ENCODE measurements at regions of chr11 and their contacts with region 1.

Region 1: DNA sequence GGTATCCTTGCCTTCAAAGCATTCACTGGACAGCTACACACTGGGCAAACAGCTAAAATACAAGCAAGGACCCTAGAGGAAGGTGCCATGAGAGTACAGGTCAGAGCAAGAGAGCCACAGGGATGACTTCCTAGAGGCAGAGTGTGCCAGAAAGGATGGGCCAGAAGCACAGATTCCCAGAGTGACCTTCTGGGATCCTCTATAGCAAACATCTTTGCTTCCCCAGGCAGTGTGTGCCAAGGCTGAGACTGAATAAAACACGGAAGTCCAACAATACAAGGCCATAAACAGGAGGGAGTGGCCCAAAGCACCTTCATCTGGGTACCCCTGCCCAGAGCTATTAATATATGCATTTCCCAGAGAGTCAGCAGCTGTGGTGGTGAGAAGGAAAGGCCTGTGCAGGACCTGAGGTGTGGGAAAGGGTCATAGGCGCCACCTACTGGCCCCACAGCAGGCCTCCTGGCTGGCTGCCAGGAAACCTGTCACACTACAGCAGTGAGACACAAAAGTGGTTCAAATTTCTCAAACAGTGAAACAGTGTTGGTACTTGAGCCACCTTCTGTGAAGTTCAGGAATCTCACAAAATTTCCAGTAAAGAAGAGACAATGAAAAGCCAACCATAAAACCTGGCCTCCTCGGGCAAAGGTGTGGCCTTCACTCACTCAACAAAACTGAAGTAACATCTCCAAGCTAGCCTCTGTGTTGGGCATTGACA is 20.3 kb downstream of the CLPB start:
- DNase-seq: peak; percentile 84

Region 2: DNA sequence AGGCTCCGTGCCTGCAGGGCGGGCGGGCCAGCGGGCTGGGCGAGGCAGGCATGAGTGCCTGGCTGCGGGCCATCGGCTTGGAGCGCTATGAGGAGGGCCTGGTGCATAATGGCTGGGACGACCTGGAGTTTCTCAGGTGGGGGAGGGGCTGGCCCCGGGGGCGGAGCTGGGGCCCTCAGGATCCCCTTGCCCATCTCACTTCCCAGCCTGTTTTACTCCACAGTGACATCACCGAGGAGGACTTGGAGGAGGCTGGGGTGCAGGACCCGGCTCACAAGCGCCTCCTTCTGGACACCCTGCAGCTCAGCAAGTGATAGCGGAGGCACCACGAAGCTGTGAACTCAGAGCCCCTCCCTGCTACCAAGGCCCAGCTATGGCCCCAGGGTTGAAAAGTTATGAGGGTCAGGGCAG is 176.0 kb before region 1 on chr11:
- CTCF ChIA-PET with region 1: no interaction called
- POLR2A ChIA-PET with region 1: no interaction called
- DNase-seq: peak; percentile 85

Region 3: DNA sequence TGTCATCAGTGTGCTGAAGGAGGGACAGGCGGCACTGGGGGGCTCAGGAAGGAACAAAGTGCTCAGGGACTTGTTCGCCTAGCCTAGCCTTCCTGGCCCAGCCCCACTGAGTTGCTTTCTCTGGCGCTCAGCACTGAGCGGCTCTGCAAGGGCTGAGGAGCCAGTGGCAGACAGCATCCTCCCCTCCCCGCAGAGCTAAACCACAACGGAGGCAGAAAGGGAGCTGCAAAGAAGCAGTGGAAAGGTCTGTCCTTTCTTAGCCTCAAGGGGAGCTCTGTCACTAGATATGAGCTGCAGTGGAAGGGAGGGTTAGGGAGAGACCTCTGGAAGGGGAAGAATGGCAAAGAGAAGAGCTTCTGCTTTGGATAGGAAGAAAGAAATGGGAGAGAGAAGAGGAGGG is 80.4 kb before region 1 on chr11:
- CTCF ChIA-PET with region 1: interaction called, 10 read pairs
- POLR2A ChIA-PET with region 1: no interaction called
- DNase-seq: peak; percentile 30

Region 4: GRCh38 chr11:72352859-72353551 is 61.1 kb before region 1 on chr11:
- CTCF ChIA-PET with region 1: interaction called, 15 read pairs
- POLR2A ChIA-PET with region 1: no interaction called
- DNase-seq: peak; percentile 20

Region 5: DNA sequence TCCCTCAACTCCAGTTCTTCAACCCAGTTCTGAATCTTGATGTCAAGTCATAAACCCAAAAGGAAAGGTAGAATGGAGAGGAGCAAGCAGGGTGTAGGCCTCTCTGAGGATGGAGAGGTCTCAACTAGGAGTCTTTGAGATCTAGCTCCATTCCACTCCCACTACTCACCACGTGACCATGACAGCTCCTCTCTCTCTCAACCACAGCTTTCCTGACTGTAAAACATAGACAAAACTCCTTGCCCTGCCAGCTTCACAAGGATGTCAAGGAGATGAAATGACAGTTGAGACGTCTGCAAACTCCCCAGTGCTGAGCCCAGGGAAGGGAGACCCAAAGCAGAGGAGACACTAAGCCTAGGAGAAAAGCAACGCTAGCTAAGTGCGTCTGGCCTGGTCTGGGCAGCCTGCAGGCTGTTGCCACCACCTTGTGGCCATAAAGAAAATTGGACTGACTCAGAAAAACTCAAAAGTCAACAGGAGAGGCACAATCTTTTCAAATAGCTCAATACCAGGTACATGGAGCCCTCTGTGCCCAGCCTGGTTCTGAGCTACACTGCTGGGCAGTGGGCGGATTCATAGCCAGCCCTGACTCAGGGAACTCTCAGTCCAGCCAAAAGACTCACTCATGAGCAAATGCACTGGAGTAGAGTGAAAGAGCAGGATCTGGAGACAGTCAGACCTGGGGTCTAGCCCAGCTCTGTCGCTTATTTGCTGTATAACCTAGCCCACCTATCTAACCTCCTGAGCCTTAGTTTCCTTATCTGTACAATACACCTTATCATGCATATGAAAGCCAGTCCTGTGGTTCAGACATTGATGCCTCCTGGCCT is 16.9 kb after region 1 on chr11:
- CTCF ChIA-PET with region 1: interaction called, 22 read pairs
- POLR2A ChIA-PET with region 1: no interaction called
- DNase-seq: peak; percentile 63